ENCODE measurements at regions of chr14 and their contacts with region 1.

Region 1: GRCh38 chr14:61698206-61698980 is 3.1 kb downstream of the HIF1A start:
- DNase-seq: no peak
- ATAC-seq: no peak
- H3K4me3 ChIP-seq: peak overlapping the region; percentile 8 to 38
- H3K4me3 Mint-ChIP-seq: peak overlapping the region; percentile 93 to 99 (median 97)
- H3K27ac ChIP-seq: no peak overlapping the region
- H3K27ac Mint-ChIP-seq: peak overlapping the region; percentile 79 to 92
- H3K4me1 ChIP-seq: peaks cover 21 to 44% of the 10 kb centered on the region in 2 experiments
- H3K4me1 Mint-ChIP-seq: peaks cover 68 to 73% (median 70%) of the 10 kb centered on the region in 3 donors
- H3K27me3 ChIP-seq: no peaks in the 10 kb centered on the region
- H3K27me3 Mint-ChIP-seq: no peaks in the 10 kb centered on the region

Region 2: GRCh38 chr14:59836116-59836515 is 1862.3 kb before region 1 on chr14:
- CTCF ChIA-PET with region 1: no interaction called
- POLR2A ChIA-PET with region 1: no interaction called
- DNase-seq: no peak
- ATAC-seq: no peak
- H3K4me3 ChIP-seq: no peak overlapping the region
- H3K4me3 Mint-ChIP-seq: no peak overlapping the region
- H3K27ac ChIP-seq: no peak overlapping the region
- H3K27ac Mint-ChIP-seq: no peak overlapping the region
- H3K4me1 ChIP-seq: no peaks in the 10 kb centered on the region
- H3K4me1 Mint-ChIP-seq: no peaks in the 10 kb centered on the region
- H3K27me3 ChIP-seq: no peaks in the 10 kb centered on the region
- H3K27me3 Mint-ChIP-seq: peaks cover 20 to 23% of the 10 kb centered on the region in 2 donors

Region 3: GRCh38 chr14:61269321-61270083 is 428.9 kb before region 1 on chr14:
- CTCF ChIA-PET with region 1: interaction called in 1 of 2 experiments, 10 read pairs
- POLR2A ChIA-PET with region 1: interaction called in 1 of 2 experiments, 19 read pairs
- DNase-seq: peak; percentile 50 to 89 (median 69)
- ATAC-seq: peak; percentile 86 to 94 (median 93)
- H3K4me3 ChIP-seq: peak overlapping the region; percentile 2 to 74
- H3K4me3 Mint-ChIP-seq: peak overlapping the region; percentile 47 to 58 (median 54)
- H3K27ac ChIP-seq: no peak overlapping the region
- H3K27ac Mint-ChIP-seq: no peak overlapping the region
- H3K4me1 ChIP-seq: peaks cover 2 to 5% of the 10 kb centered on the region in 2 experiments
- H3K4me1 Mint-ChIP-seq: peaks cover 4 to 7% (median 5%) of the 10 kb centered on the region in 3 donors
- H3K27me3 ChIP-seq: peaks cover 6 to 29% of the 10 kb centered on the region in 2 experiments
- H3K27me3 Mint-ChIP-seq: peaks cover 40 to 55% of the 10 kb centered on the region in 2 donors

Measured in T-cell (primary cell).